CD8-positive, alpha-beta T cell (primary cell): ENCODE measurements at regions of chr6 and their contacts with region 1.

Region 1: GRCh38 chr6:90403489-90404381 is 107.1 kb upstream of the BACH2 start:
- DNase-seq: no peak
- ATAC-seq: no peak
- H3K4me3 ChIP-seq: no peak overlapping the region
- H3K4me3 Mint-ChIP-seq: no peak overlapping the region
- H3K27ac ChIP-seq: peak overlapping the region in 1 of 2 experiments; percentile 72
- H3K27ac Mint-ChIP-seq: peak overlapping the region; percentile 66
- H3K4me1 ChIP-seq: peaks cover 22% of the 10 kb centered on the region
- H3K4me1 Mint-ChIP-seq: peaks cover 52% of the 10 kb centered on the region
- H3K27me3 ChIP-seq: no peaks in the 10 kb centered on the region
- H3K27me3 Mint-ChIP-seq: no peaks in the 10 kb centered on the region
- CTCF ChIP-seq: no peak

Region 2: GRCh38 chr6:90241229-90241880 is 162.4 kb before region 1 on chr6:
- CTCF ChIA-PET with region 1: no interaction called
- POLR2A ChIA-PET with region 1: no interaction called
- intact Hi-C with region 1: no loop called
- DNase-seq: peak in 2 of 9 experiments; percentile 30 to 48
- ATAC-seq: no peak
- H3K4me3 ChIP-seq: no peak overlapping the region
- H3K4me3 Mint-ChIP-seq: no peak overlapping the region
- H3K27ac ChIP-seq: no peak overlapping the region
- H3K27ac Mint-ChIP-seq: peak overlapping the region; percentile 75
- H3K4me1 ChIP-seq: peaks cover 48% of the 10 kb centered on the region
- H3K4me1 Mint-ChIP-seq: peaks cover 63% of the 10 kb centered on the region
- H3K27me3 ChIP-seq: no peaks in the 10 kb centered on the region
- H3K27me3 Mint-ChIP-seq: no peaks in the 10 kb centered on the region
- CTCF ChIP-seq: no peak

Region 3: DNA sequence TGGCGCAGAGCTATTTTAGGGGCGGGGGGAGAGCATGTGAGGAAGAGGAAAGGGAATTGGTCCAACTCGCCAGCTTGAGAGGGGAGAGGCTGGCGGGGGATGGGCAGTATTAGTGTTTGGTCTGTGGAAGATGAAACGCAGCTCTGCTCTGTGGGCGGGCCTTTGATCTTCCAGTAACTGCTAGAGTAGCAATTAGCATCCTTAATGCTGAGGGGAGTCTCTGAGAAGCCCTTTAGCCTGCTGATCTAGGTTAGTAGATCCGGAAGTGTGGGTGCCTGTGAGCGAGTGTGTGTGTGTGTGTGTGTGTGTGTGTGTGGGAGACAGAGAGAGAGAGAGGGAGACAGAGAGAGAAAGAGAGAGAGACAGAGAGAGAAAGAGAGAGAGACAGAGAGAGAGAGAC is 10.1 kb after region 1 on chr6:
- CTCF ChIA-PET with region 1: interaction called, 17 read pairs
- POLR2A ChIA-PET with region 1: interaction called, 23 read pairs
- intact Hi-C with region 1: loop called in 1 of 2 experiments (anchors 1 kb)
- DNase-seq: peak; percentile 57 to 92 (median 72)
- ATAC-seq: peak; percentile 84
- H3K4me3 ChIP-seq: peak overlapping the region; percentile 3 to 24
- H3K4me3 Mint-ChIP-seq: peak overlapping the region; percentile 79
- H3K27ac ChIP-seq: peak overlapping the region in 1 of 2 experiments; percentile 62
- H3K27ac Mint-ChIP-seq: peak overlapping the region; percentile 89
- H3K4me1 ChIP-seq: peaks cover 18% of the 10 kb centered on the region
- H3K4me1 Mint-ChIP-seq: peaks cover 33% of the 10 kb centered on the region
- H3K27me3 ChIP-seq: no peaks in the 10 kb centered on the region
- H3K27me3 Mint-ChIP-seq: no peaks in the 10 kb centered on the region
- CTCF ChIP-seq: no peak